ENCODE measurements at regions of chr3 and their contacts with region 1.

Region 1: GRCh38 chr3:101036213-101036618 is 43.0 kb upstream of the ABI3BP start:
- DNase-seq: peak; percentile 84
- H3K4me3 ChIP-seq: no peak overlapping the region
- H3K27ac ChIP-seq: peak overlapping the region; percentile 79
- H3K4me1 ChIP-seq: peaks cover 18% of the 10 kb centered on the region
- H3K27me3 ChIP-seq: no peaks in the 10 kb centered on the region
- CTCF ChIP-seq: no peak
- POLR2A ChIP-seq: peak; percentile 52

Region 2: GRCh38 chr3:100899440-100900091 is 136.7 kb before region 1 on chr3:
- CTCF ChIA-PET with region 1: no interaction called
- POLR2A ChIA-PET with region 1: no interaction called
- dilution Hi-C with region 1: no loop called
- intact Hi-C with region 1: loop called (anchors 1 kb)
- DNase-seq: peak; percentile 92
- H3K4me3 ChIP-seq: peak overlapping the region in 1 of 3 experiments; percentile 38
- H3K27ac ChIP-seq: peak overlapping the region; percentile 84
- H3K4me1 ChIP-seq: peaks cover 61% of the 10 kb centered on the region
- H3K27me3 ChIP-seq: no peaks in the 10 kb centered on the region
- CTCF ChIP-seq: no peak
- POLR2A ChIP-seq: peak; percentile 19